WTC11 (cell line): ENCODE measurements at regions of chr6 and their contacts with region 1.

Region 1: DNA sequence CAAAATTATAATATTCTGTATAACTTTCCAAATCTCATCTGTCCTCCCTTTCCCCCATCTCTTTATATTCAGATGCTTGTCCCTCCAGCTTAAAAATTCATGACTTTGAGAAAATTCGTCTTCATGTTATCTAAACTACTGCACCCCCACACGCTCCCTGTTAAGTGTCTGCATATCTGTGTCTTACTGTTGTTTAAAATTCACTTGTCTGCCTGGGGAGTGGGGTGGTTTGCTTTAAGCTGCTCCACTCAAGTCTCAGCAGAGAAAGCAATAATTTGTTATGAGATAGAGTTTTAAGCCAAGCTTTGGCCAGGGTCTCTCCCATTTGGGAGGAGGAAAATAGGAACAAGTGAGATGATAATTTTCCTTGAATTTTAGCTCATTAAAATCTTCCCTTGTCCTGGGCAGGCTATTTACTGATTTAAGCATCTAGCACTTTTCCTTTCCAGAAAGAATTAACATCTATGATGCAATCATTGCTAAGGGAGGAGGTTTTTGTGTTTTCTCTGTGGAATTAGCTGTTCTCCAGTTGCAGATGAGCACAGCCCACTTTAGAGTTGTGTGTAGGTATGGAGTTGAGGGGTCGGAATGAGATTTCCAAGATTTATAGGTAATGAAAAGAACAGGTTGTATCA is 36.8 kb downstream of the MTHFD1L start:
- DNase-seq: no peak
- ATAC-seq: no peak
- H3K4me3 Mint-ChIP-seq: no peak overlapping the region
- H3K27ac Mint-ChIP-seq: peak overlapping the region; percentile 22; the same call in 1 of the 2 replicates
- H3K4me1 Mint-ChIP-seq: peaks cover 4% of the 10 kb centered on the region; the same call in 1 of the 2 replicates
- H3K27me3 Mint-ChIP-seq: no peaks in the 10 kb centered on the region
- CTCF ChIP-seq: no peak

Region 2: DNA sequence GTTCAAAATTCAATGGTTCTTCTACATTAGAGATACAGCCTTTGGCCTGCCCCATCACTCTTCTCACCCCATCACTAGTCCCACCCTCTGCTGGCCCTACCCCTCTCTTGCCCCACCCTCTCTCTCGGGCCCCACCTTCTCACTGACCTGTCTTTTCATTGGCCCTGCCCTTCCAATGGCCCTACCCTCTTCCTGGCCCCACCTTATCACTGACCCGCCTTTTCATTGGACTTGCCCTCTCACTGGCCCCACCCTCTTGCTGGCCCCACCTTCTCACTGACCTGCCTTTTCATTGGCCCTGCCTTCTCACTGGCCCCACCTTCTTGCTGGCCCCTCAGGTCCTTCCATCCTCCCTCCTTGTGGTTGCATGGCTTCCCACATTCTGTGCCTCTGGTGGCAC is 409.8 kb before region 1 on chr6:
- CTCF ChIA-PET with region 1: no interaction called
- POLR2A ChIA-PET with region 1: interaction called, 11 read pairs
- DNase-seq: peak; percentile 19
- ATAC-seq: peak; percentile 95
- H3K4me3 Mint-ChIP-seq: no peak overlapping the region
- H3K27ac Mint-ChIP-seq: no peak overlapping the region
- H3K4me1 Mint-ChIP-seq: no peaks in the 10 kb centered on the region
- H3K27me3 Mint-ChIP-seq: no peaks in the 10 kb centered on the region; the same call in 1 of the 2 replicates
- CTCF ChIP-seq: no peak

Region 3: DNA sequence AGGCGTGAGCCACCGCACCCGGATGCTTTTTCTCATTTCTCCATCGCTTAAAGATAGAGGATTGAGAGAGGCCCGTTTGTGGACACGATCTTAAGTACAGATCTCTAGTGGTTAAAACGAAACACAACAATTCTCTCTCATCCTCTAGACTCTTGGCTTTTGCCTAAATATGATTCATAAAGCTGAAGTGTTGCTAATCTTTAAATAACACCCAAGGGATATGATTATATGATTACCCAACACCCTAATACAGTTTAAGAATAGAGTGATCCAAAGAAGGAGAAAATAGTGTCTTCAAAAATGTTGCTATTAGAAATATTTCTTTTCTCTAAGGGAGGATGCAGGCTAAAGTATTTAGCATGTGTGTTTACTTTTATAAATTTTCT is 13.6 kb after region 1 on chr6:
- CTCF ChIA-PET with region 1: no interaction called
- POLR2A ChIA-PET with region 1: no interaction called
- DNase-seq: no peak
- ATAC-seq: no peak
- H3K4me3 Mint-ChIP-seq: no peak overlapping the region
- H3K27ac Mint-ChIP-seq: no peak overlapping the region
- H3K4me1 Mint-ChIP-seq: no peaks in the 10 kb centered on the region
- H3K27me3 Mint-ChIP-seq: no peaks in the 10 kb centered on the region
- CTCF ChIP-seq: no peak